ENCODE measurements at regions of chr1 and their contacts with region 1.

Region 1: DNA sequence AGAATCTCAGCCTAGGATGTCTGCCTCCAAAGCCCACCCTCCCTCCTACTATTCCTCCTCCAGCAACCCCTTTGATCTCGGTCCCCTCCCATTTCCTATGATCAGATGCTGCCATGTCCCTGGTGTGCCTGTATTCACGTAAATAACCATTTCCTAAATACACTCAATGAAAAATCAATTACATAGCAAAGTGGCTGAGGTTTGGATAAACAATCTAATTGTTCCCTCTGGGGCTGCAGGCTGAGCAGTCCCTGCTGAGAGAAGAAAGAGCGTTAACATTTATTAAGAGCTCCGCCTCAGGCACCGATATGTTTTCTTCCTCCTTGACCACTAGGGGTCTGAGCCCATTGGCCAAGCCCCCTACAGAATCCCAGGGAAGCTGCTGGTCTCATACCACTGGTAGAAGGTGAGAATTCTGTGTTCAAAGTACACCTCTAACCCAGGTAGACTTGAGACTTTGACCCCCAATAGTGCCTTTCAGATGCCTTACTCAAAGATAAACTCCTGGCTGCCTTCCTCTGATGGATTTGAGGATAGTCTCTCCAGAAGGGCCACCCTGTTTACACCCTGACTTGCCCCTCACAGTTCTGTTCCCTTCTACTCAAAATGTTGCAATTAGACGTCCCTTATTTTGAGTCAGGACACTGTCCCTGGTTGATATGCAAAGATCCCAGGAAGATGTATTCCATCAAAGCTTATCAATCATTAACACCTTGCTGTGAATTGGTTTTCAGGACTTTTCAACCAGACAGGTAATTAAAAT is 33.9 kb upstream of the CAMK1G start:
- DNase-seq: no peak
- H3K4me3 ChIP-seq: no peak overlapping the region
- H3K27ac ChIP-seq: no peak overlapping the region
- H3K4me1 ChIP-seq: peaks cover 2 to 21% (median 12%) of the 10 kb centered on the region in 4 experiments; a peak in 5 of 7 replicates
- H3K27me3 ChIP-seq: peaks cover 0 to 5% (median under 1%) of the 10 kb centered on the region in 4 experiments; a peak in 3 of 7 replicates
- CTCF ChIP-seq: peak; percentile 52 to 65 (median 61)
- EP300 ChIP-seq: no peak
- POLR2A ChIP-seq: no peak
- RAD21 ChIP-seq: peak in 1 of 2 experiments; percentile 30; a peak in 1 of 4 replicates

Region 2: GRCh38 chr1:209473025-209473424 is 76.6 kb before region 1 on chr1:
- CTCF ChIA-PET with region 1: no interaction called
- POLR2A ChIA-PET with region 1: no interaction called
- DNase-seq: no peak
- H3K4me3 ChIP-seq: no peak overlapping the region
- H3K27ac ChIP-seq: no peak overlapping the region
- H3K4me1 ChIP-seq: no peaks in the 10 kb centered on the region; a peak in 1 of 7 replicates
- H3K27me3 ChIP-seq: no peaks in the 10 kb centered on the region
- CTCF ChIP-seq: no peak
- EP300 ChIP-seq: no peak
- POLR2A ChIP-seq: no peak
- RAD21 ChIP-seq: no peak

Region 3: DNA sequence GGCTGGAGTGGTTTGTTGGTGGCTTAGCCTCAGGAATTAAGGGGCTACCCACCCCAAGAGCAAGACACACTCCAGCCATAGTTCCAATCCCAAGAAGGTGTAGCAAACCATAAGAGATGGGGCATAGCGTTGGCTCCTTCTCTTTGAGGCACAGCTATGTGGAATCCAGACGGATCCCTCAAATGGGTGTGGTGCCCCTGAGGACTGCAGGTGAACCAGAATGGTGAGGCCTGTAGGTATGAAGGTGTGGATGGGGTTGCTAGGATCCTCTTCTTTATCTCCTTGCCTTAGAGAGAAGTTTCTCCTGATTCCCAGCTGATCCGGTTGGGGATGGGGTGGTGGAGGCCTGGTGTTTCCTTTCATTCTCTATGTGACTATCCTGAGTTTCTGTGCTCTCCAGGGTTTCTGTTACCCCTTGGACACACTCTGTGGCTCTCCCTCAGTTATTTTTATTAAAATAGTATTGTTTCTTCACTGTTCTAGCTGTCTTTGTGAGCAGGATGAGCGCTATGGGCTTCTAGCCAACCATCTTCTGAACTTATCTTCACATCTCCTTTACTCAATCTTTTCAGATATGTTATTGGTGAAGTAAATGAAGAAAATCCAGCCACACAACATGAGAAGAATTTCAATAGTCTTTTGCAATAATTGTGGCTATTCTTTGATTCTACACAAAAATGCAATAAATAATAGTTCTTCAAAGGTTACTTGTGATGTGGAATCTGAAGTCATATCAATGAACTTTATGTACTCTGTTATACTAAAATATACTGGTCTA is 46.6 kb before region 1 on chr1:
- CTCF ChIA-PET with region 1: no interaction called
- POLR2A ChIA-PET with region 1: no interaction called
- DNase-seq: no peak
- H3K4me3 ChIP-seq: no peak overlapping the region
- H3K27ac ChIP-seq: no peak overlapping the region
- H3K4me1 ChIP-seq: no peaks in the 10 kb centered on the region
- H3K27me3 ChIP-seq: no peaks in the 10 kb centered on the region
- CTCF ChIP-seq: no peak
- EP300 ChIP-seq: no peak
- POLR2A ChIP-seq: no peak
- RAD21 ChIP-seq: no peak

Region 4: GRCh38 chr1:209527993-209528392 is 21.6 kb before region 1 on chr1:
- CTCF ChIA-PET with region 1: interaction called, 16 read pairs
- POLR2A ChIA-PET with region 1: interaction called, 3 read pairs
- DNase-seq: no peak
- H3K4me3 ChIP-seq: no peak overlapping the region
- H3K27ac ChIP-seq: no peak overlapping the region
- H3K4me1 ChIP-seq: no peaks in the 10 kb centered on the region
- H3K27me3 ChIP-seq: no peaks in the 10 kb centered on the region; a peak in 1 of 7 replicates
- CTCF ChIP-seq: no peak
- EP300 ChIP-seq: no peak
- POLR2A ChIP-seq: no peak
- RAD21 ChIP-seq: no peak

Region 5: GRCh38 chr1:209534496-209535250 is 15.0 kb before region 1 on chr1:
- CTCF ChIA-PET with region 1: interaction called, 16 read pairs
- POLR2A ChIA-PET with region 1: no interaction called
- DNase-seq: no peak
- H3K4me3 ChIP-seq: no peak overlapping the region
- H3K27ac ChIP-seq: no peak overlapping the region
- H3K4me1 ChIP-seq: peaks cover 0 to 8% (median 4%) of the 10 kb centered on the region in 4 experiments; a peak in 1 of 7 replicates
- H3K27me3 ChIP-seq: no peaks in the 10 kb centered on the region; a peak in 1 of 7 replicates
- CTCF ChIP-seq: peak in 2 of 3 experiments; percentile 38 to 41; a peak in 2 of 4 replicates
- EP300 ChIP-seq: no peak
- POLR2A ChIP-seq: no peak
- RAD21 ChIP-seq: peak in 1 of 2 experiments; percentile 6; a peak in 1 of 4 replicates

Region 6: DNA sequence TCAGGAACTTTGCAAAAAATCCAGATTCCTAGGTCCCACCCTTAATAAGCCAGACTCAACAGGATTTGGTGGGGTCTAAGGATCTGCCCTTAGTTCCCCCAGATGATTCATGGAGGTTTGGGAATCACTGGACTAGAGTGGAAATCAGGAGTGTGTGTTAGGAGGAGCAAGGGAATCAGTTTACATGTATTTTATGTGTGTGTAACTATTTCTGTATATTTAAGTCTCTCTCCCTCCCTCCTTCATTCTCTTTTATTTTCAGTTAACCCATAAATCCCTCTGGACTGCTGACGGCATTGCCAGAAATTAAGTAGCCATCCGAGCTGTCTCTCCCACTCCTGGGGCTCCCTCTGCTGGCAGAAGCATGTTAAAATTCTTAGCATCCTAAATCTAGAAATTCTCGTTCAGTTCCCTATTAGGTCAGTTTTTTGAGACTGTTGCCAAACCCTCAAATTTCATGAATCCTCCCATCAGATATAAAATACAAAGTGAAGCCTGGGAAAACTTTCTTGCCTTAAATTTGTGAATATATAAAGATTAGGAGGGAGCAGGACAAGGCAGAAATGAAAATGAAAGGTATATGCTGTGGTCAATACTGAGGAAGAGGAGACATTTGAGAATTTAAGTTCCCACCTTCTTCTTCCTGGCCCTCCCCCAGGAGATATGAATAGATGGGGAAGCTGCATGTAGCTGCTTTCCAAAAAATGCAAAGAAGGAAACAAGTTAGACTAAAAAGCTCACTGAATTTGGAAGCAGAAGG is 143.3 kb after region 1 on chr1:
- CTCF ChIA-PET with region 1: no interaction called
- POLR2A ChIA-PET with region 1: no interaction called
- DNase-seq: peak in 1 of 2 experiments; percentile 82
- H3K4me3 ChIP-seq: no peak overlapping the region
- H3K27ac ChIP-seq: no peak overlapping the region
- H3K4me1 ChIP-seq: peaks cover 0 to 3% (median 0%) of the 10 kb centered on the region in 4 experiments; a peak in 1 of 7 replicates
- H3K27me3 ChIP-seq: no peaks in the 10 kb centered on the region; a peak in 2 of 7 replicates
- CTCF ChIP-seq: peak; percentile 47 to 90 (median 75)
- EP300 ChIP-seq: no peak
- POLR2A ChIP-seq: no peak
- RAD21 ChIP-seq: peak; percentile 94 to 95